GM13976 (cell line): ENCODE measurements at regions of chr15 and their contacts with region 1.

Region 1: DNA sequence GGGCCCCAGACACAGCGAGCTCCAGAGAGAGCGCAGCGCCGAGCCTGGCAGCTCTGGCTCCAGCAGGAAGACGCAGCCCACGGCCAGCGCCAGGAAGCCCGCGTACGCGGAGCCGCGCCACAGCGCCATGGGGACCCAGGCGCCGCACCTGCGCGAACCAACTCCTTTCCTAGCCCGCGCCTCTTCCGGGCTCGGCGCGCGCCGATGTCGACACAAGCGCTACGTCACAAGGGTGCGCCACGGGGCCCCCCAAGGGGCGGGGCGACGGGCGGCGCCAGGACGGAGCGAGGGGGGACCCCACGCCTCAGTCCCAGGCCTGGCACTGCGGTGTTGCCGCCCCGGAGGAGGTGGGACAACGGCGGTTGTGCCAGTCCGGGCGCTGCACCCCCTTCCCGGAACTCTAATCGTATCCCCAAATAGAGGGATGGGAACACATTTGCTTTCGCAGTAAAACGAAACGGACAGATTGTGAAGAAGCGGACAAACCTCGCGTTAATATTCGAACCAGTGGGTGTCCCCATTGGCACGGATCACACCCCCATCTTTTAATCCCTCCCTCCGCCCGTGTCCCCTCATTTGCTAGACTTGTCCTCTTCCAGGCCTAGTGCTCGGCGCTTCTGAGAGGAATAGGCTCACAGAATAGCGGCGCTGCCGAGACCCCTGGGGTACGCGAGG is at the start of gene ADPGK:
- DNase-seq: peak; percentile 97
- CTCF ChIP-seq: no peak

Region 2: GRCh38 chr15:73069109-73069508 is 285.4 kb after region 1 on chr15:
- in situ Hi-C with region 1: no loop called
- DNase-seq: no peak
- CTCF ChIP-seq: no peak

Region 3: GRCh38 chr15:73273181-73274002 is 489.7 kb after region 1 on chr15:
- in situ Hi-C with region 1: loop called (anchors 25 kb)
- DNase-seq: peak; percentile 56
- CTCF ChIP-seq: peak; percentile 70